Caco-2 (cell line): ENCODE measurements at regions of chr4 and their contacts with region 1.

Region 1: DNA sequence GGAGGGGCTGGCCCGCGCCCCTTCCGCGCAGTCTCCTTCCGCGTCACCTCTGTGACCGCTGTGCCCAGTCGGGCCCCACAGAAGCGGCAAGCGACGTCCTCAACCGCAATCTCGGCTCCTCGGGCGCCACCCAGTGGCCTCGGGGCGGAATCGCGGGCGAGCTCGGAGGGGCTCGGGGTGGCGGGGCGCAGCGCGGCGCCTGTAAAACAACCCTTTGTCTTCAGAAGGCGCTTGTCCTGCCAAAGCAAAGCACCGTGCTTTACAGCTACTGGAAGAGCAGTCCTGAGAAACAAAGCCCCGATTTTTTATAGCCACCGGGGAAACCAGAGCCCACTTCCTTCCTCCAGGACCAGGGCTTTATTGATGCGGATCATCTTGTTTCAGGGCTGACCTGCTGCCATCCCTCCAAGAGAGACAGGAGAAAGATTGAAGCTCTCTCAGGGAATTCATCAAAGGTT is 37.3 kb upstream of the CDKN2AIP start:
- DNase-seq: peak; percentile 81 to 92
- H3K4me3 ChIP-seq: peak overlapping the region; percentile 49
- H3K4me3 Mint-ChIP-seq: peak overlapping the region; percentile 75
- H3K27ac Mint-ChIP-seq: peak overlapping the region; percentile 89
- H3K4me1 ChIP-seq: peaks cover 21% of the 10 kb centered on the region
- H3K4me1 Mint-ChIP-seq: peaks cover 29% of the 10 kb centered on the region
- H3K27me3 ChIP-seq: no peaks in the 10 kb centered on the region
- H3K27me3 Mint-ChIP-seq: no peaks in the 10 kb centered on the region
- CTCF ChIP-seq: peak; percentile 86 to 87

Region 2: DNA sequence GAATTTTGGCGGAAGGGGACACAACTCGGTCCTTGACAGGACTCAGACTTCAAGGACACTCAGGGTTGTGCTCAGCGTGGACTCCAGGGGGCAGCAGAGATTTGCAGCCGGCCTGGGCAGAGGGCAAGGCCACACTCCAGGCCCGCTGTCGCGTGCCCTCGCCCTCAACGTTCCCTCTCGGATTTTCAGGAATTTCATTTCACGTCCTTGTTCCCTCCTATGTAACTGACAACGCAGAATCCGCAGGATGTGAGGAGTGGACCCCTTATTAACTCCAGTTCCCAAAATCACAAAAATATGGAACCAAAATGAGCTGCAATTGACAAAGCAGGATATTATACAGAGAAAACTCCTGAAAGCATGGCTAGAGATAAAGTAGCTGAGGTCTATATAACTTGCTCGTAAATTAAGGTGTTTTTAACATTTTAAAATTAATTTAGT is 468.9 kb before region 1 on chr4:
- CTCF ChIA-PET with region 1: interaction called, 3 read pairs
- POLR2A ChIA-PET with region 1: no interaction called
- intact Hi-C with region 1: loop called (anchors 5 kb)
- DNase-seq: peak; percentile 79 to 85
- H3K4me3 ChIP-seq: no peak overlapping the region
- H3K4me3 Mint-ChIP-seq: no peak overlapping the region
- H3K27ac Mint-ChIP-seq: no peak overlapping the region
- H3K4me1 ChIP-seq: no peaks in the 10 kb centered on the region
- H3K4me1 Mint-ChIP-seq: no peaks in the 10 kb centered on the region
- H3K27me3 ChIP-seq: no peaks in the 10 kb centered on the region
- H3K27me3 Mint-ChIP-seq: peaks cover 3% of the 10 kb centered on the region
- CTCF ChIP-seq: peak; percentile 82 to 87

Region 3: GRCh38 chr4:183261953-183262775 is 145.0 kb before region 1 on chr4:
- CTCF ChIA-PET with region 1: interaction called, 3 read pairs
- POLR2A ChIA-PET with region 1: no interaction called
- intact Hi-C with region 1: loop called (anchors 1 kb)
- DNase-seq: peak; percentile 76 to 83
- H3K4me3 ChIP-seq: no peak overlapping the region
- H3K4me3 Mint-ChIP-seq: no peak overlapping the region
- H3K27ac Mint-ChIP-seq: peak overlapping the region; percentile 73
- H3K4me1 ChIP-seq: peaks cover 33% of the 10 kb centered on the region
- H3K4me1 Mint-ChIP-seq: peaks cover 15% of the 10 kb centered on the region
- H3K27me3 ChIP-seq: no peaks in the 10 kb centered on the region
- H3K27me3 Mint-ChIP-seq: no peaks in the 10 kb centered on the region
- CTCF ChIP-seq: peak; percentile 74 to 82

Region 4: DNA sequence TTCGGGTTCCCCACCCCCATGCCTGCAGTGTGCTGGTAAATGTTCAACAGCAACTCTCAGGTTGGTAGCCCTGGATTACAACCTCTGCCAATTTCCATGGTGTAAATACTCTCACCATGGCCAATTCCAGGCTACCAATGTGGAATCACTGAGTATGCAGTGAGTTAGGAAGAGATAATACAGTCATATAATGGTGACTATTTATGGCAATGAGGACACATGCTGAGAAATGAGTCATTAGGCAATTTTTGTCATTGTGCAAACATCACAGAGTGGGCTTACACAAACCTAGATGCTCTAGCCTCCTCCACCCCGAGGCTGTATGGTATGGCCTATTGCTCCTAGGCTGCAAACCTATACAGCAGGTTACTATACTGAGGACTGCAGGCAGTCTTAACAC is 80.3 kb before region 1 on chr4:
- CTCF ChIA-PET with region 1: no interaction called
- POLR2A ChIA-PET with region 1: no interaction called
- intact Hi-C with region 1: loop called (anchors 5 kb)
- DNase-seq: no peak
- H3K4me3 ChIP-seq: no peak overlapping the region
- H3K4me3 Mint-ChIP-seq: no peak overlapping the region
- H3K27ac Mint-ChIP-seq: no peak overlapping the region
- H3K4me1 ChIP-seq: no peaks in the 10 kb centered on the region
- H3K4me1 Mint-ChIP-seq: peaks cover 13% of the 10 kb centered on the region
- H3K27me3 ChIP-seq: no peaks in the 10 kb centered on the region
- H3K27me3 Mint-ChIP-seq: no peaks in the 10 kb centered on the region
- CTCF ChIP-seq: no peak

Region 5: DNA sequence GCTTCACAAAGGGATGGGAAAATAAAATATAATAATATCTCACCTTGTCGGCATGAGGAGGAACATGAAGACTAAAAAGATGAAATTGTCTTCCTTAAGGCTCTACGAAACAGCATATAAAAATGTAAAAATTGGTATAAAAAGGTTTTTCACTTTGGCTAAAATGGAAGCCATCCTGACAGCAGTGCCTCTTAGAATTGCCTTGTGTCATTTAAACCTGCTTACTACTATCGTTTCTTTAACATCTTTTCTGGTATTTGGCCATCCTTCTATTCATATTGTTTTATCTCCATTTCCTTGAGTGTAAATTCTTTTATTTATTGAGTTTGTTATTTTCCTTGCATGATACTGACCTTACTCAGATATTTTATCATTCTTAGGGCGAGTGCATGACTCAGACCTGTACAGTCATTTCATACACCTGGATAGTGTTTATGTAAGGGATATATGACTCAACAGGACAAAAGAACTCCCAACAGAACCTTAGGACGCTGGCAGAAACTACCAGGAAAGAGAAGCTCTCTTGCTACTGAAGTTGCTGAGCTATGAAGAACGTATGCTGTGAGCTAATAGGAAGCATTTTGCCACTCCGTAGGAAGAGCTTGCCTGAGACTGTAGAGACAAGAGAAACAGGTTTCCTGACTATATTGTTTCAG is 31.4 kb after region 1 on chr4:
- CTCF ChIA-PET with region 1: interaction called, 7 read pairs
- POLR2A ChIA-PET with region 1: interaction called, 4 read pairs
- intact Hi-C with region 1: loop called (anchors 2 kb)
- DNase-seq: peak; percentile 54 to 63
- H3K4me3 ChIP-seq: no peak overlapping the region
- H3K4me3 Mint-ChIP-seq: peak overlapping the region; percentile 63
- H3K27ac Mint-ChIP-seq: peak overlapping the region; percentile 93
- H3K4me1 ChIP-seq: peaks cover 56% of the 10 kb centered on the region
- H3K4me1 Mint-ChIP-seq: peaks cover 24% of the 10 kb centered on the region
- H3K27me3 ChIP-seq: no peaks in the 10 kb centered on the region
- H3K27me3 Mint-ChIP-seq: no peaks in the 10 kb centered on the region
- CTCF ChIP-seq: no peak